ENCODE measurements at regions of chr5 and their contacts with region 1.

Region 1: GRCh38 chr5:96226941-96227552 is 206.0 kb downstream of the PCSK1 start:
- DNase-seq: peak; percentile 77
- H3K4me3 Mint-ChIP-seq: peak overlapping the region; percentile 46
- H3K27ac Mint-ChIP-seq: peak overlapping the region; percentile 82
- H3K4me1 Mint-ChIP-seq: peaks cover 38% of the 10 kb centered on the region
- H3K27me3 Mint-ChIP-seq: no peaks in the 10 kb centered on the region
- CTCF ChIP-seq: no peak

Region 2: GRCh38 chr5:95961617-95962474 is 265.2 kb before region 1 on chr5 and contains the start of gene ELL2:
- CTCF ChIA-PET with region 1: interaction called, 4 read pairs
- POLR2A ChIA-PET with region 1: interaction called, 12 read pairs
- intact Hi-C with region 1: loop called (anchors 1 kb)
- DNase-seq: peak; percentile 98
- H3K4me3 Mint-ChIP-seq: peak within 1 kb of the TSS; percentile 90
- H3K27ac Mint-ChIP-seq: peak within 1 kb of the TSS; percentile 91
- H3K4me1 Mint-ChIP-seq: peaks cover 28% of the 10 kb centered on the region
- H3K27me3 Mint-ChIP-seq: no peaks in the 10 kb centered on the region
- CTCF ChIP-seq: no peak
- total RNA-seq, gene ELL2: 144 and 147 TPM in 2 replicates

Region 3: DNA sequence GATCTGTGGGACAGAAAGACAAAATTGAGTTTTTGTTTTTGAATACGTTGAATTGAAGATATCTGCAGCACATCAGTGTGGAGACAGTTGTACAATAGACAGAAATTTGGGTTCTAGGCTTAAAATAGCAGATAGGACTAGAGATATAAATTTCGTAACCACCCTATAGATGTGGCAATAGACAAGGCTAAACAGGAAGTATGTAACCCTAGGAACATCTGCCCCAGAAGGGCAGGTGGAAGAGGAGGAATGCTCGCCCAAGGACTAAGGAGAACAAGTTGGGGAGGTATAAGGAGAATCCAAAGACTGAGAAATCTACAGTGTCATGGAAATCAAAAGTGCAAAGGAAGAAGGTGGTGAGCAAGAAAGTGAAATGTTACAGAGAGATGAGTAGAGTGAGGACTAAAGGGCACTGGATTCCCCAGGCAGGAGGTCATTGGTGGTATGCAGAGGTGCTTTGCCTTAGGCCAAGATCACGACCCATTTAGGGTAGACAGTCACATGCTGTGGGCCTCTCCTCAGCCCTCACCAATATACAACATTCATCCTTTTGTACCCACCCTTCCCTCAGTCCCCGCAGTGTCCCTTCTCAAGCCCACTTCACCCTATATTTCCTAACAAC is 156.3 kb before region 1 on chr5:
- CTCF ChIA-PET with region 1: no interaction called
- POLR2A ChIA-PET with region 1: no interaction called
- intact Hi-C with region 1: no loop called
- DNase-seq: peak; percentile 59
- H3K4me3 Mint-ChIP-seq: no peak overlapping the region
- H3K27ac Mint-ChIP-seq: peak overlapping the region; percentile 0
- H3K4me1 Mint-ChIP-seq: peaks cover 46% of the 10 kb centered on the region
- H3K27me3 Mint-ChIP-seq: no peaks in the 10 kb centered on the region
- CTCF ChIP-seq: no peak

Region 4: DNA sequence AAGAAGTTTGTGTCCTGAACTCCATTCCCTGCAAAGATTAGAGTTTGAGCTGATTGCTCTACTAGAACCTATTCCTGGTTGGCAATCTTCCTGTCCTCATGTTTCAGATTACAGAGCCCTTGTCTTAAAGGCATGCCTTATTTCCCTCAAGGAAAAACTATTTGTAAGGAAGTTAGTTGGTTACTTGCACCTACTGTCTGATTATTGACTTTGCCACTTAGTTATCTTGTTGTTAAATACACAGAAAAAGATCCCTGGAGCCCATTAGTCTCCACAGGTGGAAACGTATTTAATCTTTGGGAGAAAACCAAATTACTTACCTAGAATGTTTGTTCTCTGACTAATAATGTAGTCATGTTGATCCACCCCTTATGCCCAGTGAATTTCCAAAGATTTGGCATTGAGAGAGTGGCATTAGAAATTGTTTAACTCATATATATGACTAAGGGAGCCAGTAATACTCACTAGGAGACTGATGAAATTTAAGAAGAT is 133.1 kb before region 1 on chr5:
- CTCF ChIA-PET with region 1: interaction called, 5 read pairs
- POLR2A ChIA-PET with region 1: interaction called, 10 read pairs
- intact Hi-C with region 1: no loop called
- DNase-seq: peak; percentile 90
- H3K4me3 Mint-ChIP-seq: no peak overlapping the region
- H3K27ac Mint-ChIP-seq: peak overlapping the region; percentile 1
- H3K4me1 Mint-ChIP-seq: peaks cover 28% of the 10 kb centered on the region
- H3K27me3 Mint-ChIP-seq: no peaks in the 10 kb centered on the region
- CTCF ChIP-seq: no peak

Region 5: DNA sequence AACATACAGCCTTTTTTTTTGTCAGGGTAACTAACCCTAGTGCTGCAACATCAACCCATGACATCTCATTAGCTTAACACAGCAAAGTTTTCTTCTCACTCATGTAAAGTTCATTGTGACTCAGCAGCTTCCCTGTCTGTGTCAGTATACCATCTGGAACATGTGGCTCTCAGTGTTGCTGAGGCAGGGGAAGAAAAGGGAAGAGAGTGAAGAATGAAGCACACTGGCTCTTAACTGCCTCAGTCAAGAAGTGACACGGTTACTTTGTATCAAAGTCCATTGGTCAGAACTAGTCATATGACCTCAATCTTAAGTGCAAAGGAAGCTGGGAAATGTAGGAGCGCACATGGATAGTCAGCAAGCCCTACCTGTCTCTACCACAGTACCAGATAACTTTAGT is 80.4 kb before region 1 on chr5:
- CTCF ChIA-PET with region 1: interaction called, 5 read pairs
- POLR2A ChIA-PET with region 1: interaction called, 38 read pairs
- intact Hi-C with region 1: no loop called
- DNase-seq: peak; percentile 41
- H3K4me3 Mint-ChIP-seq: no peak overlapping the region
- H3K27ac Mint-ChIP-seq: no peak overlapping the region
- H3K4me1 Mint-ChIP-seq: peaks cover 27% of the 10 kb centered on the region
- H3K27me3 Mint-ChIP-seq: no peaks in the 10 kb centered on the region
- CTCF ChIP-seq: no peak

Region 6: DNA sequence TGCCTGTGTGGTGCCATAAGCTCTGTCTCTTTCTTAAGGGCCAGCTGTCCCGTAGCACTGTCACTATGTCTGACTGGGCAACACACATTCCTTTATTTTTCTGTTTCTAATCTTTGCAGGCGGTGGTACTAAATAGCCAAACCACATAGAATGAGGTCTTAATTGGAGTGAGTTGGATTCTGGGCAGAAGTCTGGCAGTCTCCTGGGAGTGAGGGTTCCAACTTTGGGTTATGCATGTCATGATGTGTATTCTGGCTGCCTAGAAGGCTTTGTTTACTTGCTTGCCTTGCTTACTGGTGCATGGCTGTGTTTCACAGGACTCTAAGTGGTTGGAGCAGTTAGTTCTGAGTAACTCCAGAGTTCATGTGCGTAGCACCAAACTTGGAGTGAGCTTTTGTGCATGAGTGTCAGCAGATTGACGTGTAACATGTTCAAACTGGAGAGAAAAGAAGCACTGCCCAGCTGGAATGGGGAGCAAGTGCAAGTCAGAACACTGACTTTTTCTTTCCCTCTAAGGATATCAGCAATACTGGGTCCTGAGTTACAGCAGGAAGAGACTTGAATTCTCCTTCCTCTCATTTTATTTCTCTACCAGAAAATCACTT is 20.2 kb after region 1 on chr5:
- CTCF ChIA-PET with region 1: interaction called, 3 read pairs
- POLR2A ChIA-PET with region 1: interaction called, 44 read pairs
- intact Hi-C with region 1: no loop called
- DNase-seq: no peak
- H3K4me3 Mint-ChIP-seq: no peak overlapping the region
- H3K27ac Mint-ChIP-seq: peak overlapping the region; percentile 56
- H3K4me1 Mint-ChIP-seq: peaks cover 32% of the 10 kb centered on the region
- H3K27me3 Mint-ChIP-seq: no peaks in the 10 kb centered on the region
- CTCF ChIP-seq: no peak

Region 7: DNA sequence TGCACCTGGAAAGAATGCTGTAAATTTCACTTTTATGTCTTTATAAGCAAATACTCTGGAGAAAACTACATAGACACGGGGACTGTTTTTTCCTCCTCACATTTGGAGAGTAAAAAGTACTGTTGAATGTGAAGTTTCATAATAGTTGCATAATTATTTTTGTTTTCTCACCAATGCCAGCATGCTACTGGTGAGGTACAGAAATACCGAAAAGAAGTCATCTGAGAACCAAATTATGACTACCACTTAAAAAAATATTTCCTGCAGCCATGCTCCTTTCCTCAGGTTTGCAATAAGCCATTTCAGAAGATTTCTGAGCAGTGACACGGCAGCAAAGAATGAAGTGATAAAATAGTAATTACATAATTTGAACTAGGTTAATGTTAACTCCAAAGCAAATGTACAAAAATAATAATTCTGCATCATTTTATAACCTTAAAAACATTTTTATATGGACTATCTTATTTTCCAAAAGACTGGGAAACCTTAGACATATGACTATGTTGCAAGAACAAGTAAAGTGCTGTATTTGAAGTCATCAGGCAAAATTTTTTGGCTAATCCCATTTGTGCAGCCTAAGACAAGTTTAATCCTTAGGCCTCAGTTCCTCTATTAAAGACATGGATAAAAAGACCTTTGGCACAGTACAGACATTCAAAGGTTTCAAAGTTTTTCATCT is 61.3 kb after region 1 on chr5:
- CTCF ChIA-PET with region 1: no interaction called
- POLR2A ChIA-PET with region 1: interaction called, 11 read pairs
- intact Hi-C with region 1: loop called (anchors 5 kb)
- DNase-seq: peak; percentile 68
- H3K4me3 Mint-ChIP-seq: no peak overlapping the region
- H3K27ac Mint-ChIP-seq: no peak overlapping the region
- H3K4me1 Mint-ChIP-seq: peaks cover 10% of the 10 kb centered on the region
- H3K27me3 Mint-ChIP-seq: no peaks in the 10 kb centered on the region
- CTCF ChIP-seq: no peak

Region 8: GRCh38 chr5:96324708-96325107 is 97.7 kb after region 1 on chr5:
- CTCF ChIA-PET with region 1: no interaction called
- POLR2A ChIA-PET with region 1: interaction called, 7 read pairs
- intact Hi-C with region 1: loop called (anchors 5 kb)
- DNase-seq: peak; percentile 92
- H3K4me3 Mint-ChIP-seq: no peak overlapping the region
- H3K27ac Mint-ChIP-seq: peak overlapping the region; percentile 13
- H3K4me1 Mint-ChIP-seq: peaks cover 5% of the 10 kb centered on the region
- H3K27me3 Mint-ChIP-seq: no peaks in the 10 kb centered on the region
- CTCF ChIP-seq: no peak

Region 9: GRCh38 chr5:96844476-96844990 is 617.5 kb after region 1 on chr5:
- CTCF ChIA-PET with region 1: no interaction called
- POLR2A ChIA-PET with region 1: no interaction called
- intact Hi-C with region 1: no loop called
- DNase-seq: no peak
- H3K4me3 Mint-ChIP-seq: no peak overlapping the region
- H3K27ac Mint-ChIP-seq: no peak overlapping the region
- H3K4me1 Mint-ChIP-seq: peaks cover 6% of the 10 kb centered on the region
- H3K27me3 Mint-ChIP-seq: no peaks in the 10 kb centered on the region
- CTCF ChIP-seq: no peak

Measured in MCF 10A (cell line).